Mammary epithelial cell (primary cell): ENCODE measurements at regions of chr1 and their contacts with region 1.

Region 1: DNA sequence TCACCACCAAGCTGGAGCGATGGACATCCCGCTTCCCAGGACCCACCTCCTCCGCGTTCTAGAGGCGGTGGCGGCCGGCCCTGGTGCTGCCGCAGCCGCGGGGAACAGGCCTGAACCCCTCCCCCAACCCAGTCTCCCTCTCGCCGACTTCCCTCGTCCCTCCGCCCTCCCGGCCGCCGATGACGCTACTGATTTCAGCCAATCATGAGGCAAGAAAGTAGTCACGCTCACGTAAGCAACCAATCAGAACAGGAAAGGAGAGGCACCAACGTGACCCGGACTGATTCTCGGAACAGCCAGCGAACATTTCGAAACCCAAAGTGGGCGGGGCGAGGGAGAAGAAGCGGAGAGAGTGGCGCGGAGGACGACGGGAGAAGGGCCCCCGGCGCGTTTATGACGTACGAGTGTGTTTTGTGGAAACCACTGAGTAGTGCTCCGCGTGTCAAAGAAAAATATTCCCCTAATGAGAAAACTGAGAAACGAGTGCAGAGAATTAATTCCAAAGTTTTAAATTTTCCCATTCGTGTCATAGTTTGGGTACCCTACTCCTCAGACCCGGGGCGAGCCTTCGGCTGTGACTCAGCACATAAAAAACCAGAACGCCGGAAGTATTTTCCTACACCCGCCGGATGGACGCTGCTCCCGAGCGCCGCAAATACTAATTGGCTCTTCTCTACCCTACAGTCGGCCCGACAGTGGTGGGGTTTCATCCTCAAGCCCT is at the start of gene NRDC:
- DNase-seq: peak; percentile 100
- H3K4me3 ChIP-seq: peak within 1 kb of the TSS; percentile 74 to 100 (median 92)
- H3K27ac ChIP-seq: peak within 1 kb of the TSS; percentile 97
- H3K4me1 ChIP-seq: peaks cover 8% of the 10 kb centered on the region
- H3K27me3 ChIP-seq: no peaks in the 10 kb centered on the region
- CTCF ChIP-seq: no peak
- total RNA-seq, gene NRDC: 61.7 to 154 TPM

Region 2: DNA sequence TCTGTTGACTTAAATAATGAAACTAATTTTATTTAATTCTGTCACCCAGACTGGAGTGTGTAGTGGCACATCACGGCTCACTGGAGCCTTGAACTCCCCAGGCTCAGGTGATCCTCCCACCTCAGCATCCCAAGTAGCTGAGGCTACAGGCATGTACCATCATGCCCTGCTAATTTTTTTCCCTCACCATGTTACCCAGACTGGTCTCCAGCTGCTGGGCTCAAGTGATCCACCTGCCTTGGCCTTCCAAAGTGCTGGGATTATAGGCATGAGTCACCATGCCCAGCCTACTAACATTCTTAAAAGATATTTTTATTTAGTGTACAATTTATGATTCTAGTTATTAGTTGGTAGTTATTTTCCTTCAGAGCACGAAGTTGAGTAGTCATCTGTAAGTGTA is 49.7 kb before region 1 on chr1:
- CTCF ChIA-PET with region 1: no interaction called
- dilution Hi-C with region 1: no loop called
- in situ Hi-C with region 1: no loop called
- intact Hi-C with region 1: loop called (anchors 2 kb)
- DNase-seq: peak; percentile 82
- H3K4me3 ChIP-seq: no peak overlapping the region
- H3K27ac ChIP-seq: no peak overlapping the region
- H3K4me1 ChIP-seq: peaks cover 10% of the 10 kb centered on the region
- H3K27me3 ChIP-seq: no peaks in the 10 kb centered on the region
- CTCF ChIP-seq: no peak

Region 3: DNA sequence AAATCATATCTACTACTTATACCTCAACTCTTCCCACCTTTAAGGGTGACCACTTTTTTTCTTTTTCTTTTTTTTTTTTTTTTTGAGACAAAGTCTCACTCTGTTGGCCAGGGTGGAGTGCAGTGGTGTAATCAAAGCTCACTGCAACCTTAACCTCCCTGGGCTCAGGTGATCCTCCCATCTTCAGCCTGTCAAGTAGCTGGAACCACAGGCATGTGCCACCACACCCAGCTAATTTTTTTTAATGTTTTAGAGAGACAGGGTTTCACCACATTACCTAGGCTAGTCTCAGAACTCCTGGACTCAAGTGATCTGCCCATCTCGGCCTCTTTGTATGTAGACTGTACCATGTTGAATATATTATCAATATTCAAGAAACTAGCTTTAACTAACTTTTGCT is 39.7 kb before region 1 on chr1:
- CTCF ChIA-PET with region 1: no interaction called
- dilution Hi-C with region 1: no loop called
- in situ Hi-C with region 1: no loop called
- intact Hi-C with region 1: loop called (anchors 2 kb)
- DNase-seq: peak; percentile 42
- H3K4me3 ChIP-seq: no peak overlapping the region
- H3K27ac ChIP-seq: no peak overlapping the region
- H3K4me1 ChIP-seq: no peaks in the 10 kb centered on the region
- H3K27me3 ChIP-seq: no peaks in the 10 kb centered on the region
- CTCF ChIP-seq: no peak